K562 (cell line): ENCODE measurements at regions of chr19 and their contacts with region 1.

Region 1: GRCh38 chr19:48333467-48334384 is 8.4 kb downstream of the EMP3 start:
- DNase-seq: peak; percentile 92 to 97 (median 94)
- ATAC-seq: peak; percentile 89
- H3K4me3 ChIP-seq: peak overlapping the region; percentile 50
- H3K27ac ChIP-seq: peak overlapping the region; percentile 91
- H3K4me1 ChIP-seq: peaks cover 21 to 61% of the 10 kb centered on the region in 2 experiments
- H3K27me3 ChIP-seq: no peaks in the 10 kb centered on the region
- CTCF ChIP-seq: peak; percentile 78 to 99 (median 98)
- EP300 ChIP-seq: no peak
- POLR2A ChIP-seq: peak; percentile 70
- RAD21 ChIP-seq: peak; percentile 98 to 99

Region 2: DNA sequence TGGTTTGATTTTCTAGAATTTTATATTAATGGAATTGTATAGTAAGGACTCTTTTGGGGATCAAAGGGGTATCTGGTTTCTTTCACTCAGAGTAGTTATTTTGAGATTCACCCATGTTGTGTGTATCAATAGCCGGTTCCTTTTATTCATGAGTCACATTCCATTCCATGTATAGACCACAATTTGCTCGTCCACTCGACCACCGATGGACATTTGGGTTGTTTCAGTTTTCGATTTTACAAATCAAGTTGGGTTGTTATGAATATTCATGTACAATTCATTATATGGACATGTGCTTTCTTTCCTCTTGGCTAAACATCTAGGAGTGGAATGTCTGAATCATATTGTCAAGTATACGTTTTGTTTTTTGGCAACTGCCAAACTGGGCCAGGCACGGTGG is 18.0 kb before region 1 on chr19:
- CTCF ChIA-PET with region 1: interaction called, 57 read pairs
- POLR2A ChIA-PET with region 1: interaction called, 12 read pairs
- in situ Hi-C with region 1: no loop called
- intact Hi-C with region 1: loop called (anchors 1 kb)
- DNase-seq: no peak
- ATAC-seq: no peak
- H3K4me3 ChIP-seq: no peak overlapping the region
- H3K27ac ChIP-seq: no peak overlapping the region
- H3K4me1 ChIP-seq: peaks cover 12 to 14% of the 10 kb centered on the region in 2 experiments
- H3K27me3 ChIP-seq: no peaks in the 10 kb centered on the region; a peak in 1 of 5 replicates
- CTCF ChIP-seq: no peak
- EP300 ChIP-seq: no peak
- POLR2A ChIP-seq: no peak
- RAD21 ChIP-seq: no peak

Region 3: GRCh38 chr19:48501496-48502350 is 168.0 kb after region 1 on chr19:
- CTCF ChIA-PET with region 1: no interaction called
- POLR2A ChIA-PET with region 1: no interaction called
- in situ Hi-C with region 1: no loop called
- intact Hi-C with region 1: loop called (anchors 5 kb)
- DNase-seq: peak; percentile 95 to 97 (median 96)
- ATAC-seq: peak; percentile 91
- H3K4me3 ChIP-seq: peak overlapping the region; percentile 51
- H3K27ac ChIP-seq: peak overlapping the region; percentile 73
- H3K4me1 ChIP-seq: peaks cover 10 to 50% of the 10 kb centered on the region in 2 experiments; a peak in 4 of 5 replicates
- H3K27me3 ChIP-seq: no peaks in the 10 kb centered on the region
- CTCF ChIP-seq: 0 out of 6 replicates have a peak, but pooled peaks of 1 of the 3 experiments have one; percentile 10
- EP300 ChIP-seq: no peak; the same call in 1 of the 2 replicates
- POLR2A ChIP-seq: peak; percentile 80
- RAD21 ChIP-seq: no peak

Region 4: GRCh38 chr19:48899781-48900476 is 566.2 kb after region 1 on chr19 and contains the start of gene NUCB1:
- CTCF ChIA-PET with region 1: no interaction called
- POLR2A ChIA-PET with region 1: no interaction called
- in situ Hi-C with region 1: no loop called
- intact Hi-C with region 1: no loop called
- DNase-seq: peak; percentile 98 to 100 (median 98)
- ATAC-seq: peak; percentile 87
- H3K4me3 ChIP-seq: peak within 1 kb of the TSS; percentile 89
- H3K27ac ChIP-seq: peak within 1 kb of the TSS; percentile 77
- H3K4me1 ChIP-seq: peaks cover 27 to 69% of the 10 kb centered on the region in 2 experiments
- H3K27me3 ChIP-seq: no peaks in the 10 kb centered on the region
- CTCF ChIP-seq: peak; percentile 16 to 52 (median 45); a peak in 3 of 6 replicates
- EP300 ChIP-seq: peak; percentile 73
- POLR2A ChIP-seq: peak; percentile 75
- RAD21 ChIP-seq: peak; percentile 26 to 42
- polyA plus RNA-seq, gene NUCB1: 3.1 to 5.3 TPM